ENCODE measurements at regions of chr17 and their contacts with region 1.

Region 1: DNA sequence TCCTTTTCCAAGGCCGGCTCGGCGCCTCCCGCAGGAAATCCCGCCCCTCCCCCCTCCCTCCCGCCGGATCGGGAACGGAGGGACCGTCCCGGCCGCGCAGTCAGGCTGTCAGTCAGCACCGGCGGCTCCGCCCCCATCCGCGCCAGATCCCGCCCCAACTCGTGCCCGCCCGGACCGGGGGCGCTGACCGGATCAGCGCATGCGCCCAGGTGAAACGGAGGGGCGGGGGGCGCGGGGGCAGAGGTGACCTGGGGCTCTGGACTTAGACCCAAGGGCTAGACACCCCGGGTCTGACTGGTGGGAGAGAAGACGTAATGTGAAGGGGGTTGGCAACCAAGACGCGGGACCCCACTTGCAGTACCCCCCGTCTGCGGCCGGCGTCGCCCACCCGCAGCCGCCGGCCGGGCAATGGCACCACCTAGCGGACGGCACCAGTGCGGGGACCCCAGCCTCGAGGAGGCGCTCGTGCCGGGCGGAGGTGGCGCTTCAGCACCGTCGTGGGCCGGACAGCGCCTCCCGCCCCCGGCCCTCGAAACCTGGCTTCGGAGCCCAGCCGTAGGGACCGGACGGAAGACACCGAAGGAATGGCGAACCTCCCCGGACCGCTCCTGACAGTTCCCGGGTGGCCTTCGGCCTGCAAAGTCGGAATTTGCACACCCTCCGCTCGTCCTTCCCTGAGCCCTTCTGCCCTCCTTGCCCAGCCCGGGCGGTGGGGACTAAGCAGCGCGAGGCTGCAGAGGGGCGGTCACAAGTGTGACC is at the start of gene CASKIN2:
- DNase-seq: peak; percentile 94 to 99
- ATAC-seq: peak; percentile 69 to 85
- H3K4me3 ChIP-seq: peak within 1 kb of the TSS; percentile 89
- H3K27ac ChIP-seq: peak within 1 kb of the TSS; percentile 91 to 98
- H3K4me1 ChIP-seq: peaks cover 38% of the 10 kb centered on the region
- CTCF ChIP-seq: peak; percentile 100
- EP300 ChIP-seq: no peak
- POLR2A ChIP-seq: no peak; the same call in 1 of the 2 replicates
- RAD21 ChIP-seq: peak; percentile 81 to 95
- polyA plus RNA-seq, gene CASKIN2: 3.6 and 4.6 TPM in 2 replicates

Region 2: GRCh38 chr17:75430159-75430974 is 85.3 kb before region 1 on chr17:
- CTCF ChIA-PET with region 1: interaction called, 40 read pairs
- POLR2A ChIA-PET with region 1: no interaction called
- DNase-seq: peak; percentile 90 to 91
- ATAC-seq: peak; percentile 66 to 84; a peak in 5 of 6 replicates
- H3K4me3 ChIP-seq: peak overlapping the region; percentile 17; the same call in 2 of the 3 replicates
- H3K27ac ChIP-seq: peak overlapping the region; percentile 80 to 89
- H3K4me1 ChIP-seq: peaks cover 35% of the 10 kb centered on the region
- CTCF ChIP-seq: no peak
- EP300 ChIP-seq: no peak
- POLR2A ChIP-seq: 0 out of 2 replicates have a peak, but pooled peaks have one; percentile 15
- RAD21 ChIP-seq: no peak

Region 3: GRCh38 chr17:75476271-75476671 is 39.4 kb before region 1 on chr17:
- CTCF ChIA-PET with region 1: interaction called, 19 read pairs
- POLR2A ChIA-PET with region 1: no interaction called
- DNase-seq: no peak
- ATAC-seq: no peak
- H3K4me3 ChIP-seq: no peak overlapping the region
- H3K27ac ChIP-seq: no peak overlapping the region
- H3K4me1 ChIP-seq: no peaks in the 10 kb centered on the region
- CTCF ChIP-seq: no peak
- EP300 ChIP-seq: no peak
- POLR2A ChIP-seq: no peak
- RAD21 ChIP-seq: no peak

Region 4: DNA sequence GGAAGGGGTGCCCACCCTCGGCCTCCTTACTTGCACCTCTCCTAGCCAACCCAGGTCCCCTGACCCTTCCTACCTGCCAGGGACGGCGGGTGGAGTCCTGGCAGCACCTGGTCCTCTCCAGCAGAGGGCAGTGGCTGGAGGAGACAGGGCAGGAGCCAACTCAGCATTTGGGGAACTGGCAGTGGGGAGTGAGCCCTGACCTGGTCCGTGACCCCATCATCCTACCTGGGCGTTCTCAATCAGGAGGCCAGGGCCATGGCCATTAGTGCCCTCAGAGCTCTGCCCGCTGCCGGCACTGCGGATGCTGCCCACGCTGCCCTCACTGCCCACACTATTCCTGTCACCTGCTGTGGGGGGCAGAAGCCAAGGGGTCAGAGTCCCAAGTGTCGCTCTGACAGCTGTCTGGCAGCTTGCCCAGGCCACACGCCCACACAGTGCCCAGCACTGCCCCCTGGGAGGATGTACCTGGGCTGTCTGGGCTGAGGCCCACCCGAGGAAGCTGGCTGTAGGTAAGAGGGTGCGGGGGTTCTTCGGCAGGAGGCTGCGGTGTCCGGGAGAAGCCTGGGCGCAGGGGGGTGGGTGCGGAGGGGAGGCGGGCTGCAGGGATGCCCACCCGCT is 11.2 kb before region 1 on chr17:
- CTCF ChIA-PET with region 1: interaction called, 55 read pairs
- POLR2A ChIA-PET with region 1: interaction called, 3 read pairs
- DNase-seq: peak; percentile 61 to 89
- ATAC-seq: peak; percentile 70 to 81
- H3K4me3 ChIP-seq: no peak overlapping the region
- H3K27ac ChIP-seq: no peak overlapping the region
- H3K4me1 ChIP-seq: peaks cover 14% of the 10 kb centered on the region
- CTCF ChIP-seq: peak; percentile 67
- EP300 ChIP-seq: no peak
- POLR2A ChIP-seq: no peak
- RAD21 ChIP-seq: peak; percentile 61 to 66

Region 5: GRCh38 chr17:75601057-75602051 is 85.7 kb after region 1 on chr17:
- CTCF ChIA-PET with region 1: interaction called, 10 read pairs
- POLR2A ChIA-PET with region 1: no interaction called
- DNase-seq: peak; percentile 82 to 88
- ATAC-seq: peak; percentile 55 to 87
- H3K4me3 ChIP-seq: no peak overlapping the region
- H3K27ac ChIP-seq: peak overlapping the region; percentile 40 to 64
- H3K4me1 ChIP-seq: peaks cover 43% of the 10 kb centered on the region
- CTCF ChIP-seq: peak; percentile 86
- EP300 ChIP-seq: no peak
- POLR2A ChIP-seq: no peak
- RAD21 ChIP-seq: peak; percentile 62 to 63

Measured in A549 (cell line).